CD8-positive, alpha-beta memory T cell (primary cell): ENCODE measurements at regions of chr10 and their contacts with region 1.

Region 1: DNA sequence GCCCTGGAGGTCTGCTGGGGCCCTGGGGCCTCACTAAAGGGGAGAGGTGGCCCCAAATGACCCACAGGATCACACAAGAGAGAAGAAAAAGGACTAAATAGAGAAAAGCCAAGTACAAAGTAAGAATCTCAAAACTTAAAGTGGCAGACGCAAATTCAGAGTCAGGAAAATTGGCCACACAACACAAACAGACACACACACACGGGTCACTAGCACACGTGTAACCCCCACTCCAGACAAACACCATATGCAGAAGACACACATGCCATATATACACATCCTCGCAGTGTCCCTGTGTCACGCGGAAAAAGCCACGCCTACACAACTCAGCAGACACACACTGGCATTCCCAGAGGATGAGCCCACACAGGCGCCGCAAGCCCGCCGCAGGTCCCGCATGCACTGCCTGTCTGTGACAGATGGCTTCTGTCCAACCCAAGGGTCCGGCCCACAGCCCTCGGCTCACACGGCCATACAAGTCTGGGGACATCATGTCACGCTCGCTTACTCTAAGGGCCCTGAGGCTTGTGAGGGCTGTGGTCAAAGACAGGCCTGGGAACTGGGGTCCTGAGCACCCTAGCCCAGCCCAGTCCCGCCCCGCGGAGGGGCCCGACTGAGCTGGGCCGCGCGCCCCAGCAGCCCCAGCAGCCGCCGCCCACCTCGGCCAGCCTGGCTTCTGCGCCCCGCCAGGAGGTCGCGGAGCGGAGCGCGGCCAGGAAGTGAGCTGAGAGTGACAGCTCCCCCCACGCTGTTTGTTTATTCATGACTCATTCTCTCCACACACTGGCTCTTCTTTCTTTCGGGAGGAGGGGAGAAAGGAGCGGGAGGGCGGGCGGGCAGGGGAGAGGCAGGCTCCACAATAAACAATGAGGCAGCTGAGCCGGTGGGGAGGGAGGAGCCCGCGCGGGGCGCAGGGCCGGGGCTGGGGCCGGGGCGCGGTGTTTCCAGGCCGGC is 95.5 kb upstream of the ZMIZ1 start:
- DNase-seq: peak; percentile 50 to 85 (median 61)
- H3K4me3 ChIP-seq: peak overlapping the region; percentile 30
- H3K4me3 Mint-ChIP-seq: peak overlapping the region; percentile 74 to 97 (median 82)
- H3K27ac ChIP-seq: peak overlapping the region; percentile 75
- H3K27ac Mint-ChIP-seq: peak overlapping the region; percentile 59 to 91 (median 72)
- H3K4me1 ChIP-seq: peaks cover 6% of the 10 kb centered on the region
- H3K4me1 Mint-ChIP-seq: peaks cover 12 to 24% (median 19%) of the 10 kb centered on the region in 3 donors
- H3K27me3 ChIP-seq: no peaks in the 10 kb centered on the region
- H3K27me3 Mint-ChIP-seq: no peaks in the 10 kb centered on the region

Region 2: DNA sequence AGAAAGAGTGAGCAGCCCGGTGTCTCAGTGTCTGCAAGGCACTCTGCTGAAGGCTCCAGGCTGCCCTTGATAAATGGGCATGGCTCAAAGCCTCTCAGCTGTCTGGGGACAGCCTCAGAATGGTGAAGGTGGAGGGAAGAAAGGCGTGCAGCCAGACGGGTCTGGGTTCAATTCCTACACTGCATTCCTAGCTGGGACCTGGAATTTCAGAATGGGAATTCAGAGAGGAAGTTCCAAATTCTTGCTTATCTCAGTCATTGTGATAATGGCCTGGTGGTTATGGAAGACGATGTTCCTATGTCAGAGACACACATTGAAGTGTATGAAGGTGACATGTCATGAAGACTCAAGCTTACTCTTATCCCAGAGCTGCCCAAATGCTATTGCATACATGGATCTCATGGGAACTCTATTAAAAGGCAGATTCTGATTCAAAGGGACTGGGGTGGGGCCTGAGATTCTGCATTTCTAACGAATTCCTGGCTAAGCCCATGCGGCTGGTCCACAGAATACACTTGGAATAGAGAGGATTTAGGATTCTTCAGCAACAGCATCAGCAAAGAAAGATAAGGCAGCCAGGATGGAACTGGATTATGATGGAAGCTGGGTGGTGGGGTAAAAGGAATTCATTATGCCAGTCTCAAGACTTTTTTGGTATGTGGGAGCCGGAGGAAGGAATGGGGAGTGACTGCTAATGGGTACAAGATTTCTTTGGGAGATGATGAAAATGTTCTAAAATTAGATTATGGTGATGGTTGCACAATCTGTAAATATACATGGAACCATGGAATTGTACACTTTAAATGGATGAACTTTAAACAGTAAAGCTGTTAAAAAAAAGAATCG is 13.0 kb after region 1 on chr10:
- CTCF ChIA-PET with region 1: interaction called, 16 read pairs
- POLR2A ChIA-PET with region 1: interaction called, 3 read pairs
- DNase-seq: no peak
- H3K4me3 ChIP-seq: no peak overlapping the region
- H3K4me3 Mint-ChIP-seq: no peak overlapping the region
- H3K27ac ChIP-seq: no peak overlapping the region
- H3K27ac Mint-ChIP-seq: no peak overlapping the region
- H3K4me1 ChIP-seq: no peaks in the 10 kb centered on the region
- H3K4me1 Mint-ChIP-seq: peaks cover 4 to 14% (median 9%) of the 10 kb centered on the region in 3 donors
- H3K27me3 ChIP-seq: no peaks in the 10 kb centered on the region
- H3K27me3 Mint-ChIP-seq: peaks cover 0 to 2% of the 10 kb centered on the region in 2 donors

Region 3: GRCh38 chr10:79014796-79015195 is 41.6 kb after region 1 on chr10:
- CTCF ChIA-PET with region 1: no interaction called
- POLR2A ChIA-PET with region 1: no interaction called
- DNase-seq: no peak
- H3K4me3 ChIP-seq: no peak overlapping the region
- H3K4me3 Mint-ChIP-seq: no peak overlapping the region
- H3K27ac ChIP-seq: no peak overlapping the region
- H3K27ac Mint-ChIP-seq: no peak overlapping the region
- H3K4me1 ChIP-seq: no peaks in the 10 kb centered on the region
- H3K4me1 Mint-ChIP-seq: no peaks in the 10 kb centered on the region
- H3K27me3 ChIP-seq: no peaks in the 10 kb centered on the region
- H3K27me3 Mint-ChIP-seq: peaks cover 0 to 2% of the 10 kb centered on the region in 2 donors